ENCODE measurements at regions of chr2 and their contacts with region 1.

Region 1: DNA sequence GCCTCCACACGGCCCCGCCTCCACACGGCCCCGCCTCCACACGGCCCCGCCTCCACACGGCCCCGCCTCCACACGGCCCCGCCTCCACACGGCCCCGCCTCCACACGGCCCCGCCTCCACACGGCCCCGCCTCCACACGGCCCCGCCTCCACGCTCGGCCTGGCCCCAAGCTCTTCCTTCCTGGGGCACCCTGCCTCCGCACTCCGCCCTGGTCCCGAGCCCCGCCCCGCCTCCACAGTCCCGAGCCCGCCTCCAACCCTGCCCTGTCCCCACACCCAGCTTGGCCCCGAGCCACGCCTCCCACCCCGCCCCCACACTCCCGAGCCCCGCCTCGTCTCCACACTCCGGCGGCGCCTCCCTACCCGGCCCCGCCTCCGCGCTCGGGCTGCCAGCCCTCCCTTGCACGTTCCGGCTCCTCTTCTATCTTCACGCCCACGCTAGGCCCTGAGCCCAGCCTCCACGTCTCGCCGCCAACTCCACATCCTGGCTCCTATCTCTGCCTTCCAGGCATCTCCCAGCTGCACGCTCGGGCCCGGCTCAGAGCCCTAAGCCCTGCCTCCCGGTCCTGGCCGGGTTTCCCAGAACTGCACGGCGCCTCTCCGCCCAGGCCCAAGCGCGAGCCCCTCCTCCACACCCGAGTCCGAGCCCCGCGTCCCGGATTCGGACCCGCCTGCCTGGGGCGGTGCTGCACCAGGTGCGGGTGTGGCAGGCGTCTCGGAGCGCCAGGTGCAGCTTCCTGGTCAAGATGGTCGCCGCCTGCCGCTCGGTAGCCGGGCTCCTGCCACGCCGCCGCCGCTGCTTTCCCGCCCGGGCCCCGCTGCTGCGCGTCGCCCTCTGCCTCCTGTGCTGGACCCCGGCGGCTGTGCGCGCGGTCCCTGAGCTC is at the start of gene TMEM87B:
- DNase-seq: peak; percentile 86
- ATAC-seq: peak; percentile 79
- H3K4me3 ChIP-seq: peak within 1 kb of the TSS; percentile 90
- H3K27ac ChIP-seq: peak within 1 kb of the TSS; percentile 64
- H3K4me1 ChIP-seq: peaks cover 5% of the 10 kb centered on the region
- H3K27me3 ChIP-seq: no peaks in the 10 kb centered on the region
- CTCF ChIP-seq: no peak
- EP300 ChIP-seq: 0 out of 4 replicates have a peak, but pooled peaks of 1 of the 2 experiments have one; percentile 32
- POLR2A ChIP-seq: peak; percentile 86
- RAD21 ChIP-seq: no peak
- polyA plus RNA-seq, gene TMEM87B: 5.7 to 8.2 TPM

Region 2: GRCh38 chr2:112108178-112108832 is 53.2 kb after region 1 on chr2:
- CTCF ChIA-PET with region 1: no interaction called
- POLR2A ChIA-PET with region 1: no interaction called
- RAD21 ChIA-PET with region 1: no interaction called
- SMC1A ChIA-PET with region 1: no interaction called
- in situ Hi-C with region 1: no loop called
- intact Hi-C with region 1: loop called (anchors 5 kb)
- DNase-seq: no peak
- ATAC-seq: no peak
- H3K4me3 ChIP-seq: no peak overlapping the region
- H3K27ac ChIP-seq: no peak overlapping the region
- H3K4me1 ChIP-seq: no peaks in the 10 kb centered on the region
- H3K27me3 ChIP-seq: no peaks in the 10 kb centered on the region
- CTCF ChIP-seq: no peak
- EP300 ChIP-seq: no peak
- POLR2A ChIP-seq: no peak
- RAD21 ChIP-seq: no peak

Region 3: DNA sequence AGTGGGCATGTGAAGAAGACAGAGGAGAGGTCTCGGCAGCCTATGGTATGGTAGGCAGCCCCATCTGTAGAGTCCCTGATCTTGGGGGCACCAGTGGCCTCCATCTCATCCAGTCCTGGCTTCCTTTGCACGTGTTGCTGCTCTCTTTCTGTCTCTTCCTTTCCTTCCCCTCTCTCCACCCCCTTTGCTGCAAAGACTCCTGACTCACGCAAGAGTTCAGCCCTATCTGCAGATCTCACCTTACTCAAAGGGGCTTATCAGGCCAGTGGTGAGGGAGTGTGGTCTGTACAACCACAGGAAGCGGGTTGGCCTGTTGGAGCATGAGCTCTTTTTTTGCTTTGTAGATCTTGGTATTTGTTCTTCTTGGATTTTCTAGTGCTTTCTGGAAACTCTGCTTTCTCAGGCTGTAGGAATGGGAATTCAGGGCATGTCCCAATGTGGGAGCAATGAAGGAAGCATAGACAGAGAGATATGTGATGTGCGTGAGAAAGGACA is 651.1 kb after region 1 on chr2:
- CTCF ChIA-PET with region 1: no interaction called
- POLR2A ChIA-PET with region 1: no interaction called
- RAD21 ChIA-PET with region 1: no interaction called
- SMC1A ChIA-PET with region 1: no interaction called
- in situ Hi-C with region 1: no loop called
- intact Hi-C with region 1: loop called (anchors 10 kb)
- DNase-seq: peak; percentile 64
- ATAC-seq: peak; percentile 63
- H3K4me3 ChIP-seq: no peak overlapping the region; the same call in 1 of the 2 replicates
- H3K27ac ChIP-seq: peak overlapping the region; percentile 94
- H3K4me1 ChIP-seq: peaks cover 53% of the 10 kb centered on the region
- H3K27me3 ChIP-seq: no peaks in the 10 kb centered on the region
- CTCF ChIP-seq: no peak
- EP300 ChIP-seq: no peak; a peak in 1 of 4 replicates
- POLR2A ChIP-seq: no peak
- RAD21 ChIP-seq: no peak

Measured in GM12878 (cell line).